HEK293T (cell line): ENCODE measurements at regions of chr15 and their contacts with region 1.

Region 1: DNA sequence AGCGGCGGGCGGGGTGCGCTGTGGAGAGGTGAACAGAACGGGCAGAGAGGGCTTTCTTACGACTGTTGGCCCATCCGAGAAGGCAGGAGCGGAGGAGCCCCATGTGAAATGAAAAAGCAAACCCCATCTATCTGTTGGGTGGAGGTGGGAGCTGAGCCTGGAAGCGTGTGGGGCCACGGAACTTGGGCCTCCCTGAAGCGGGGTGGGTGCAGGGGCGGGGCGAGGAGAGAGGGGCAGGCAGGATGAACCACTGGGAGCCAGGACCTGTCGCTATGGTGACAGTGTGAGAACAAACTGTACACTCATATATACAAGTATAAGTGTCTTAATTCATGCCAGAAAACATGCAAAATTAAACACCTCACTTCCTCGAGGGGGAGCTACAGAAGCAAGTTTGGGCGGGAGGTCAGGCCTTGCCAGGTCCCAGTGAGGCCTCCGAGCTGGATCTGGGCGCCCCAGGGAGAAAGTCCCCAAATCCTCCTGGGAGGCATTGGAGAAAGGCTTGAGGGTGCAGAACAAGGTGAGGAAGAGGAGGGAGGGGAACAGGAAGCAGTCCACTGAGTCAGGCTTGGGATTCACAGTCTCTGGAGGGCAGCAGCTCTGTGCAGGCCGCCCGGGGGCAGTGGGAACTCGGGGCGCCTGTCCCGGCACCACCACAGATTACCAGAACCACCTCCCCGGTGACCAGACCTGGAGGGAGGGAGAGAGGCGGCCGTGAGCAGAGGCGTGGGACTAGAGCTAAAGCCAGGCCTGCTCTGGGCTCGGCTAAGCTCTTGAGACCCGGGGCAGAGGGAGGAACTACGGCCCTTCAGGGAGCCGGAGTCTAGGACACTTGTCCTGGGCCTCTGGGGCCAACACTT is 34.8 kb downstream of the RBPMS2 start:
- DNase-seq: no peak

Region 2: DNA sequence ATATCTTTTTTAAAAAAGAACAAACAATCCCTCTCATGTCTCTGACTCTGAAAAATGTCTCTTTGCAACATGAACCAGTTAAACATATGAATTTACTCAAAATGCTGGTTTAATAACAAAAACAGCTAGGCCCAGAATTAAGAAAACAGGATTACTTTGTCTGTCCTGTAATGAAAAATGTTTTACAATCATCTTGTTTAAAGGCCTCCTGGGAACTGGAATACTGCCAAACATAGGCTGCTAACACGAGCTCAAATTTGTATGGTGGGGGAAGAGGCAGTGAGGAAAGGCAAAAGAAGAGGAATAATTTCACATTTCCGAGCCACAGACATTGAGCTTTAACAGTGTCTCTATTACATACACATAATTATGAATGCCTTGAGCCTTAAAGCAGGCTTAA is 516.0 kb before region 1 on chr15:
- CTCF ChIA-PET with region 1: no interaction called
- POLR2A ChIA-PET with region 1: no interaction called
- DNase-seq: no peak

Region 3: GRCh38 chr15:64710664-64711428 is 29.7 kb before region 1 on chr15:
- CTCF ChIA-PET with region 1: no interaction called
- POLR2A ChIA-PET with region 1: no interaction called
- DNase-seq: no peak

Region 4: DNA sequence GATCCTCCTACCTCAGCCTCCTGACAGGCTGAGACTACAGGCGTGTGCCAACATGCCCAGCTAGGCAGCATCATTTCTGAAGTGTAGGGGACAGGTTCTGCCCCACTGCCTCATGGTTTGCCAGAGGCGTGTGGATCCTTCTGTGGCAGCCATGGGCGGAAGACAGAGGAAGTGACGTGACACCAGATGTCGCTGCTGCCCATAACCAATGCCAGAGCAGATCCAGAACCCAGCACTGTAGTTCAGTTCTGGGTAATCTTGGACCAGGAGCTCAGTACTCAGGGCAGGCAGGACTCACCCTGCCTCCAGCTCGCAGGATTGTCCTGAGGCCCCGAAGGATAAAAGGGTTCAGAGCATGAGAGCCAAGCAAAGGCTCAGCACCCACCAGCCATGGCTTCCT is 26.7 kb after region 1 on chr15:
- CTCF ChIA-PET with region 1: no interaction called
- POLR2A ChIA-PET with region 1: no interaction called
- DNase-seq: no peak

Region 5: GRCh38 chr15:64809649-64810496 is 69.3 kb after region 1 on chr15:
- CTCF ChIA-PET with region 1: interaction called, 15 read pairs
- POLR2A ChIA-PET with region 1: no interaction called
- DNase-seq: peak; percentile 79

Region 6: DNA sequence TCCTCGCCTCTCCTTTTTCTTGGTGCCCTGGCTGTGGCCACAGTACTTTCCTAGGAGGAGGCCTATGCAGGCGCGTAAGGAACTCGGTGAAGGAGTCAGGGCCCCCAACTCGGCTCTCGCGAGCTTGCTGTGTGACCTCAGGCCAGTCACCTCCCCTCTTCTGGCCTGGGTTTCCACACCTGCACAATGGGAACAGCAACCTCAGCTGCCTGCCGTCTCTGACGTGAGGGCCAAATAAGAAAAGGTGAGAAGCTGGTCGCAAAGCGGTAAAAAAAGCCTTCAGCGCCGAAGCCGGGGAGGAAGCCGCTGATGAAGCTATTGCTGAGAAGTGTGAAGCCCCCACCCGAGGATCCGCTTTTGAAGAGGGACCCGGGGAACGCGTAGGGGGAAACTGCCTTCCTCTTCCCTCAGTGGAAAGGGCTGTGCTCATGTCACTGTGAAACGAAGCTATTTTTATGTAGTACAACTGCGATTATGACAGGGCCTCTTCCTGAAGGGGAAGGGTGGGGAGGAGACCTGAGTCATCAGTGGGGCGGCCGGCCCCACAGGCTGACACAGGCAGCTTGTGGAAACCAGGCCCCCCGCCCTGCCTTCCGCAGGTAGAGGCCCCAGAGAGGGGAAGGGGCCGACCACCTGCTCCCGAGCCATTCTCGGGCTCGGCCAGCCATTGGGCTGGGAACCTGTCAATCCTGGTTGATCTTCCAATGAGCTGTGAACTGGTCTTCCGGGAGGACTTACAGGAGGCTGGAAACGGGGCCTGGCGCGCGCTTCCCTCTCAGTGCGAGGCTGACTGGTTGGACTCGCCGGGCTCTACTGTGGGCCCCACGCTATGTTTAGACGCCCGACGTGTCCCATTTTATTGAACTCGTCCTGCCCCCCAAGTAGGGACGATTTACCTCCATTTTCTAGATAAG is 153.2 kb after region 1 on chr15:
- CTCF ChIA-PET with region 1: no interaction called
- POLR2A ChIA-PET with region 1: no interaction called
- DNase-seq: no peak